Right cardiac atrium (tissue), 5 donors: ENCODE measurements at regions of chr20 and their contacts with region 1.

Region 1: DNA sequence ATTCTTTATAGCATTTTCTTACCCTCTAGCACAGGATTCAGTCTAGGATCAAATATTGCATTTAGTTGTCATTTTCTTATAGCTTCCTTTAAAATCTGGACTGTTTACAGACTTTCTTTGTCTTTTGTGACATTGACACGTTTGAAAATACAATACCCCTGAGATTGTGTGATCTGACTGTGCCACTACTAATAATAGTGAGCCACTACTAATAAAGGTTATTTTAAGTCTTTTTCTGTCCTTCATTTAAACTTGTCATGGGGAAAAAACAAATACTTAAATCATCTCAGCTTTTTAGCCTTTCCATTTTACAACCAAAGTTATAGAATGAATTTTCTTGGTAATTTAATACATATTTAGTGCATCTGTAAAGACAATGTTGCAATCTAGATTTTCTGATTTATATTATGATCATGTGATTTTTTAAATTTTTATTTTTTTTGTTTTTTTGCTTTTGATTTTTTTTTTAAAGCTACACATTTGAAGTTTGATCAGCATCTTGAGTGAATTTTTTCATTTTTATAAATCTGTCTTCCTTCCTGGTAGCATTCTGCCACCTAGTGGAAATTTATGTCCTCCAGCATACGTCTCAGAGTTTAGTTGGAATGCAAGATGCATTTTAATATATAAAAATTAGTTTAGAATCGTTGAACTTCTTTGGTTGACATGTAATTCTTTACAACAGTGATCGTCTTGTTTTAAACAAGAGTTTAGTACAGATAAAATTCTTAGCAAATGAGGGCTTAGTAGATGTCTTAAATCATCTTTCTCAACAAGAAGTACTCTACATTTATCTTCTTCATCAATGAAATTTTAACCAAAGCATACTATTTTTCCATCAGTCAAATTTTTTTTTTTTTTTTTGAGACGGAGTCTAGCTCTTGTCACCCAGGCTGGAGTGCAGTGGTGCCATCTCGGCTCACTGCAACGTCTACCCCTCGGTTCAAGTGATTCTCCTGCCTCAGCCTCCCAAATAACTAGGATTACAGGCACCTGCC is 119.4 kb downstream of the NCOA3 start:
- DNase-seq: no peak
- ATAC-seq: no peak
- H3K4me3 ChIP-seq: no peak overlapping the region
- H3K27ac ChIP-seq: no peak overlapping the region
- H3K4me1 ChIP-seq: no peaks in the 10 kb centered on the region
- H3K27me3 ChIP-seq: no peaks in the 10 kb centered on the region

Region 2: GRCh38 chr20:47191074-47191673 is 429.9 kb before region 1 on chr20:
- intact Hi-C with region 1: loop called in 3 of 4 experiments (anchors 5 to 10 kb)
- DNase-seq: no peak
- ATAC-seq: no peak
- H3K4me3 ChIP-seq: no peak overlapping the region
- H3K27ac ChIP-seq: no peak overlapping the region
- H3K4me1 ChIP-seq: peaks cover 3% of the 10 kb centered on the region
- H3K27me3 ChIP-seq: no peaks in the 10 kb centered on the region

Region 3: DNA sequence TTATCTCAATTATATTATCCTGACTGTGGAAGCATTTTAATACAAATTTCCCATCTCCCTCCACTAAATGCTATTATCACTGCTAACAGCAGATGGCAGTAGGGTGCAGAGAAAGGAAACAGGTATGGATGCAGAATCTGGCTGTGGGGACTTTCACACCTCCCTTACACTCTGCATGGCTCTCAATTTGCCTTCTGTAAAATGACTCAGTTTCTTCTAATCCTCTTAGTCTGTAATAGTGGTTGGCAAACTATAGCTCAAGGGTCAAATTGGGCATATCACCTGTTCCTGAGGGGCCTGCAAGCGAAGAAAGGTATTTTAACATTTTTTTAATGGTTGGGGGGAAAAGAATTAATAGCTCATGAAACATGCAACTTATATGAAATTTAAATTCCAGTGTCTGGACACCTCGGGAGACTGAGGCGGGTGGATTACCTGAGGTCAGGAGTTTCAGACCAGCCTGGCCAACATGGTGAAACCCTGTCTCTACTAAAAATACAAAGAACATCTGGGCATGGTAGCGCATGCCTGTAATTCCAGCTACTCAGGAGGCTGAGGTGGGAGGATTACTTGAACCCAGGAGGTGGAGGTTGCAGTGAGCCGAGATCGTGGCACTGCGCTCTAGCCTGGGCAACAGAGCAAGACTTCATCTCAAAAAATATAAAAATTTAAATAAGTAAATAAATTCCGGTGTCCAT is 348.1 kb before region 1 on chr20:
- intact Hi-C with region 1: loop called in 3 of 4 experiments (anchors 5 to 10 kb)
- DNase-seq: no peak
- ATAC-seq: peak; percentile 50 to 72
- H3K4me3 ChIP-seq: no peak overlapping the region
- H3K27ac ChIP-seq: no peak overlapping the region
- H3K4me1 ChIP-seq: no peaks in the 10 kb centered on the region
- H3K27me3 ChIP-seq: no peaks in the 10 kb centered on the region

Region 4: GRCh38 chr20:47400685-47401084 is 220.4 kb before region 1 on chr20:
- intact Hi-C with region 1: loop called in 1 of 4 experiments (anchors 10 kb)
- DNase-seq: peak in 1 of 3 donors; percentile 3
- ATAC-seq: no peak
- H3K4me3 ChIP-seq: no peak overlapping the region
- H3K27ac ChIP-seq: no peak overlapping the region
- H3K4me1 ChIP-seq: peaks cover 2% of the 10 kb centered on the region
- H3K27me3 ChIP-seq: no peaks in the 10 kb centered on the region

Region 5: DNA sequence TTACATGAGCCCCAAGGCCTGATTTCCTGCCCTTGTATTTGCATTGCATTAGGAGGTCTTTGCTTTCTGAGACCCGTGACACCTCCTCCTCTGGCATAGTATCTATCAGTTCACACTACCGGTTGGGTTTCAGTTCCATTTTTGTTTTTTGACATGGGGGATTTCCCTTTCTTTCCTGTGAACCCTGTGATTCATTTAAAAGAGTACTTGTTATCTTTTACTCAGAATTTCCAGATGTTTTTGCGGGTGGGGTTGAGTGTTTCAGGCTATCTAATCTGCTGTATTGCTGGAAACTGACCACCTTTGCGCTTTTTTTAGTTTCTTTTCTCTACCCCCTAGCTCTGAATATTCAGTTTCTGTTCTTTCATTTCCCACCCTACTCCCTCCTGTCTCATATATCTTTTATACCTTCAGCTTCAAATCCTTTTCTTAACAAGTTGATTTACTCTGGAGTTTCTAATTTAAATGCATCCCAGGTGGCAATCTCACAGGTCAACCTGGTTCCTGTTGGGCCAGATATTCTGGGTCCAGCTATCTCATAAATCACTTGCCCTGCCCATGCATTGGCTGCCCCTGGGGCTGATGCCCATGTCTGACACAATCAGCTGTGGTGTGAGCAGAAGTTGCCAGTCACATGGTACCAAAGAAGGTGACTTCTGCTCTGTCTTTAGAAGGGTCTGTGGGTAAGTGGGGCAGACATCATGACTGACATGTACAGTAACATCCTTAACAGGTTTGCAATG is 133.8 kb before region 1 on chr20:
- intact Hi-C with region 1: no loop called
- DNase-seq: no peak
- ATAC-seq: peak; percentile 65 to 88
- H3K4me3 ChIP-seq: no peak overlapping the region
- H3K27ac ChIP-seq: peak overlapping the region; percentile 67
- H3K4me1 ChIP-seq: peaks cover 2% of the 10 kb centered on the region
- H3K27me3 ChIP-seq: no peaks in the 10 kb centered on the region

Region 6: DNA sequence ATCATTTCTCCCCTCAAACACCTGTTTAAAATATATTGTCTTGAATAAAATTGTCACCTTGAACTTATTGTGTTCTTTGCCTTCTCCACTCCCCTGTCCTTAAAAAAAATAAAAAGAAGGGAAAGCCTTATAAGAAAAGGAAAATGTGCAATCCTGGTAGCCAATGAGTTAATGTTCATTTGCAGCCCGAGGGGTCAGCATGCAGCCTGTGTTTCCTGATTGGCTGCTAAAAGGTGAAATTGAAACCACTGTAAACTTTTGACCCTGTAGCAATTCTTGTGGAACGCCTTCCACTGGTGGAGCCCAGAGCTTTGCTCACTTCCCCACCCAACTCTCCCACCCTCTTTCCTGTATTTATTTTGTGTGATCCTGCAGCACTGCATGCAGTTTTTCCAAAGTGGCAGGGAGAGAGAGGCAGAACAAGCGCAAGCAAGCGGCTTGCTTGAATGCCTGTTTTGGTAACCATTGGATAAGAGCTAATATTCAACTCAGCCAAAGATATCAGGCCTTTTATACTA is 44.5 kb before region 1 on chr20:
- intact Hi-C with region 1: no loop called
- DNase-seq: peak; percentile 52 to 76 (median 74)
- ATAC-seq: peak; percentile 96 to 97
- H3K4me3 ChIP-seq: peak overlapping the region; percentile 35
- H3K27ac ChIP-seq: peak overlapping the region; percentile 87
- H3K4me1 ChIP-seq: peaks cover 6% of the 10 kb centered on the region
- H3K27me3 ChIP-seq: no peaks in the 10 kb centered on the region

Region 7: DNA sequence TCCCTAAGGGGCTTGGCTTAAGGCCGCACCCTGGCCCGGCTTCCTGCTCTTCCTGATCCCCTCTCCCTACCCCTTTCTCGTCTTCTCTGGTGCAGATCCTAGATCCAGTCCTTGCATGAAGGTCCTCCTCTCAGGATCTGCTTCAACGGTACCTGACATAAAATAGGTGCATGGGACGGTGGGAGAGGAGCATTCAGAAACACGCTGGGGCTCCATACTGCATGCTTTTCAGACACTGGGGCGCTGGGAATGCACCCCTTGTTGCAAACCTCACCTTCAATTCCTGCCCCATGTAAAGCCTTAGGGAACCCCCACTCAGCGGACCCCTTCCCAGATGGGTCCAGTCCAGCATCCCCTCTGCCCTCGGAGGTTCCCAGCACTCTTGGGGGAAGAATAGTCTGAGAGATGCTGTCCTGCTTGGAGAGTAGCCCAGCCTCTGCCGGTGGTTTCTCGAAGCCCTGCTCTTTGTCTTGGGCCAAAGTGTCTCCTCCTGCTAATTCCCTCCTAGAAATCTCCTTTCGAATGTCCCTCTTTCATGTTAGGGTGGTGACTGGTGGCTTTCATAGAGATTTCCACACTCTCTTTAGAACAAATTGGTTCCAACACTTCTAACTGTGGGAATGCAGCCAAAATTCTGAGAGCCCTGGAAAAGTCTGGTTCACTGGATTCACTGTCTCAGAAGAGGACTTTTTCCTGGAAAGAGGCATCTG is 189.0 kb after region 1 on chr20:
- intact Hi-C with region 1: no loop called
- DNase-seq: no peak
- ATAC-seq: no peak
- H3K4me3 ChIP-seq: no peak overlapping the region
- H3K27ac ChIP-seq: no peak overlapping the region
- H3K4me1 ChIP-seq: no peaks in the 10 kb centered on the region
- H3K27me3 ChIP-seq: no peaks in the 10 kb centered on the region